ENCODE measurements at regions of chr12 and their contacts with region 1.

Region 1: DNA sequence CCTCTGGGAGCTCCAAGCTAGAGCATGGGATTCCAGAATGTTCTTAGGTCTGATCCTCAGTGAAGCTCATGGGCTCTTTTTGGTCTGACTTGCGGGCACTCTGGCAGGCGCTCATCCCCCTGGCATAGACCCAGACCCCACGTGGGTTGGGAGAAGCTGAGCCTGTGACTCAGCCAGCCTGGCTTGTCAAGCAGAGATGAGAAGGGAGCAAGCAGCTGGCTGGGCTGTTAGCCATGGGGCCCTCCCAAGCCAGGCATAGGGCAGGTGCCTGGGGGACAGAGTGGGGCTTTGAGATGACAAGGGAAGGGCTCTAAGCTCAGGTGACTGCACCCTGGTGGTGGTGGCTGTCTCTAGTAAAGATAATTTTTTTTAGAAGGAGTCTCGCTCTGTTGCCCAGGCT is 80.3 kb upstream of the NOS1 start:
- DNase-seq: peak; percentile 82

Region 2: GRCh38 chr12:116959845-116960514 is 481.8 kb before region 1 on chr12:
- intact Hi-C with region 1: loop called (anchors 5 kb)
- DNase-seq: no peak

Region 3: GRCh38 chr12:117421068-117421752 is 20.5 kb before region 1 on chr12:
- intact Hi-C with region 1: no loop called
- DNase-seq: no peak